ENCODE measurements at regions of chr1 and their contacts with region 1.

Region 1: DNA sequence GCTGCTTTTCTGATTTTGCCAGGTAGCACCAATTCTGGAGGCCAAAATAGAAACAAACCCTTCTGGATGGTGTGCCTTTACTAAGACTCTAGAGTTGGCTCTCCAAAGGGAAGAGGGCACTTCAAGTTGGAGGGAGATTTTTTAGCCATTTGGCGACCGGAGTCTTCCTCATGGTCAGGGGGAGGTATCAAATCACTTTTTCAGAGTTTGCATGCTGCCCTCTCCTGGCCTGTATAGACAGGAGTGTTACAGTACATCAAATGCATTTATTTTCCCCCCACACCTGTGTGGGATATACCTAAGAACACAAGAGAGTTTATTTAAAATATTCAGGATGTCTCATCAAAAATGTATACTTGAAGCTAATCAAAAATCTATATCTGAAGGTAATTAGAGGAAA is 3.2 kb downstream of the GREM2 start:
- DNase-seq: no peak
- H3K4me3 ChIP-seq: no peak overlapping the region
- H3K27ac ChIP-seq: no peak overlapping the region
- H3K4me1 ChIP-seq: peaks cover 0 to 16% (median 12%) of the 10 kb centered on the region in 4 donors
- H3K27me3 ChIP-seq: peaks cover 0 to 10% (median 0%) of the 10 kb centered on the region in 4 donors
- CTCF ChIP-seq: peak in 2 of 3 experiments; percentile 15 to 32
- EP300 ChIP-seq: no peak
- POLR2A ChIP-seq: no peak

Region 2: DNA sequence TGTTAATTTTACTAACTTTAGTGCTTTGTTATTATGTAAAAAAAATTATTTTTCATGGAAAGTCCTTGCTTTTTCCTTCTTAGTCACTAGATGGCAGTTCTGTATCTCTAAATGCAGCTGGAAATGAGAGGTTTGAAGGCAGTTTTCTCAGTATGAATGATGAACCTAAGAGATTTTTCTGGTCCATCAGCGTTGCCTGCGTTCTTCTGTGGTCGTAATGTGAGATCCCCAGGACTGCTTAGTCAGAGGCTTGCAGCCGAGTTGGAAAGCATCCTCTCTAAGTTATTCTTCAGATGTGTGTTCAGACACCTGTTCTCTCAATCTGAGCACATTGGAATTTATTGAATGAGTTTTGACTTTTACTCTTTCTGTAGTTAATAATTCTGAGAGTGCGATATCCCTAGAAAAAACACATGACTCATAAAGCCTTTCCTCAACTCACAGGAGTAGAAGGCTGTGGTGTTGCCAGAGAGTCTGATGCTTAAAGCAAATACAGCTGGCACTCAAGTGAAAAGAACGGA is 417.8 kb before region 1 on chr1:
- intact Hi-C with region 1: loop called (anchors 5 kb)
- DNase-seq: no peak
- H3K4me3 ChIP-seq: no peak overlapping the region
- H3K27ac ChIP-seq: peak overlapping the region in 1 of 4 donors; percentile 14
- H3K4me1 ChIP-seq: peaks cover 0 to 18% (median 14%) of the 10 kb centered on the region in 4 donors
- H3K27me3 ChIP-seq: peaks cover 0 to 4% (median 0%) of the 10 kb centered on the region in 4 donors
- CTCF ChIP-seq: peak; percentile 42 to 58 (median 55)
- EP300 ChIP-seq: no peak
- POLR2A ChIP-seq: no peak